ENCODE measurements at regions of chr4 and their contacts with region 1.

Region 1: DNA sequence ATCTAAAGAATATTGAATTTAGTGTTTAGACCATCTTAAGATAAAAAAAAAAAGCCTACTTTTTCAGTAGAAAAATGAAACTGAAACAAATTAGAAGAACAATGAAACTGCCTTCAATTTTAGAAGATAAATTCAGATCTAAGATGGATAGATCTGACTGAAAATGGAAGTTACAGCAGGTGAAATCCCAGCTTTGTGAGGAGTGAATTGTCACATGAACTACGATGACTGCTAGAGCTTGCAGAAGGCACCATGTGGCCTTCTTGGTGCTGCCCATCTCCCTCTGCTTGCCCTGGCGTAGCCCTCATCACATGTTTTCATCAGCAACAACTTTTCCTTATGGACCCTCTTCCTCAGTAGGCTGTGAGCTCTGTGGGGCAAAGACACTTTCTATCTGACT is 51.4 kb upstream of the EMCN start:
- DNase-seq: no peak
- ATAC-seq: peak; percentile 68
- H3K4me3 ChIP-seq: no peak overlapping the region
- H3K27ac ChIP-seq: no peak overlapping the region
- H3K4me1 ChIP-seq: no peaks in the 10 kb centered on the region
- H3K27me3 ChIP-seq: no peaks in the 10 kb centered on the region
- CTCF ChIP-seq: no peak
- EP300 ChIP-seq: no peak
- POLR2A ChIP-seq: no peak
- RAD21 ChIP-seq: no peak

Region 2: GRCh38 chr4:99949034-99949998 is 619.9 kb before region 1 on chr4:
- CTCF ChIA-PET with region 1: no interaction called
- POLR2A ChIA-PET with region 1: no interaction called
- RAD21 ChIA-PET with region 1: no interaction called
- SMC1A ChIA-PET with region 1: no interaction called
- in situ Hi-C with region 1: no loop called
- intact Hi-C with region 1: no loop called
- DNase-seq: peak; percentile 77
- ATAC-seq: peak; percentile 39
- H3K4me3 ChIP-seq: peak overlapping the region; percentile 94
- H3K27ac ChIP-seq: peak overlapping the region; percentile 97
- H3K4me1 ChIP-seq: peaks cover 7% of the 10 kb centered on the region; the same call in 1 of the 2 replicates
- H3K27me3 ChIP-seq: no peaks in the 10 kb centered on the region
- CTCF ChIP-seq: peak; percentile 86 to 94 (median 89)
- EP300 ChIP-seq: no peak
- POLR2A ChIP-seq: peak; percentile 78
- RAD21 ChIP-seq: peak; percentile 75

Region 3: GRCh38 chr4:100547541-100548199 is 21.5 kb before region 1 on chr4:
- CTCF ChIA-PET with region 1: interaction called, 4 read pairs
- POLR2A ChIA-PET with region 1: no interaction called
- RAD21 ChIA-PET with region 1: interaction called, 3 read pairs
- SMC1A ChIA-PET with region 1: interaction called, 11 read pairs
- in situ Hi-C with region 1: no loop called
- intact Hi-C with region 1: no loop called
- DNase-seq: no peak
- ATAC-seq: no peak
- H3K4me3 ChIP-seq: no peak overlapping the region
- H3K27ac ChIP-seq: no peak overlapping the region
- H3K4me1 ChIP-seq: no peaks in the 10 kb centered on the region
- H3K27me3 ChIP-seq: no peaks in the 10 kb centered on the region
- CTCF ChIP-seq: no peak
- EP300 ChIP-seq: no peak
- POLR2A ChIP-seq: no peak
- RAD21 ChIP-seq: no peak

Region 4: GRCh38 chr4:100591161-100591876 is 22.1 kb after region 1 on chr4:
- CTCF ChIA-PET with region 1: no interaction called
- POLR2A ChIA-PET with region 1: no interaction called
- RAD21 ChIA-PET with region 1: no interaction called
- SMC1A ChIA-PET with region 1: no interaction called
- in situ Hi-C with region 1: no loop called
- intact Hi-C with region 1: no loop called
- DNase-seq: no peak
- ATAC-seq: no peak
- H3K4me3 ChIP-seq: no peak overlapping the region
- H3K27ac ChIP-seq: no peak overlapping the region
- H3K4me1 ChIP-seq: no peaks in the 10 kb centered on the region
- H3K27me3 ChIP-seq: no peaks in the 10 kb centered on the region
- CTCF ChIP-seq: no peak
- EP300 ChIP-seq: no peak
- POLR2A ChIP-seq: no peak
- RAD21 ChIP-seq: no peak

Measured in GM12878 (cell line).